Panc1 (cell line): ENCODE measurements at regions of chr6 and their contacts with region 1.

Region 1: GRCh38 chr6:169183233-169183632 is 70.4 kb downstream of the THBS2 start:
- DNase-seq: no peak
- ATAC-seq: no peak
- H3K4me3 ChIP-seq: no peak overlapping the region
- H3K27ac ChIP-seq: no peak overlapping the region
- H3K4me1 ChIP-seq: no peaks in the 10 kb centered on the region
- H3K27me3 ChIP-seq: no peaks in the 10 kb centered on the region
- CTCF ChIP-seq: no peak

Region 2: GRCh38 chr6:168640752-168641151 is 542.5 kb before region 1 on chr6:
- CTCF ChIA-PET with region 1: no interaction called
- POLR2A ChIA-PET with region 1: no interaction called
- in situ Hi-C with region 1: no loop called
- intact Hi-C with region 1: no loop called
- DNase-seq: no peak
- ATAC-seq: no peak
- H3K4me3 ChIP-seq: no peak overlapping the region
- H3K27ac ChIP-seq: no peak overlapping the region
- H3K4me1 ChIP-seq: no peaks in the 10 kb centered on the region
- H3K27me3 ChIP-seq: peaks cover 13% of the 10 kb centered on the region
- CTCF ChIP-seq: no peak

Region 3: GRCh38 chr6:169212897-169213813 is 29.9 kb after region 1 on chr6:
- CTCF ChIA-PET with region 1: no interaction called
- POLR2A ChIA-PET with region 1: no interaction called
- in situ Hi-C with region 1: no loop called
- intact Hi-C with region 1: no loop called
- DNase-seq: peak; percentile 62
- ATAC-seq: peak; percentile 100
- H3K4me3 ChIP-seq: peak overlapping the region; percentile 45 to 60
- H3K27ac ChIP-seq: peak overlapping the region; percentile 89
- H3K4me1 ChIP-seq: peaks cover 6% of the 10 kb centered on the region; the same call in 1 of the 2 replicates
- H3K27me3 ChIP-seq: no peaks in the 10 kb centered on the region
- CTCF ChIP-seq: peak; percentile 81

Region 4: GRCh38 chr6:169997930-169998218 is 814.6 kb after region 1 on chr6:
- CTCF ChIA-PET with region 1: no interaction called
- POLR2A ChIA-PET with region 1: no interaction called
- in situ Hi-C with region 1: no loop called
- intact Hi-C with region 1: loop called (anchors 5 kb)
- DNase-seq: no peak
- ATAC-seq: no peak
- H3K4me3 ChIP-seq: no peak overlapping the region
- H3K27ac ChIP-seq: no peak overlapping the region
- H3K4me1 ChIP-seq: no peaks in the 10 kb centered on the region
- H3K27me3 ChIP-seq: no peaks in the 10 kb centered on the region
- CTCF ChIP-seq: no peak